ENCODE measurements at regions of chr7 and their contacts with region 1.

Region 1: DNA sequence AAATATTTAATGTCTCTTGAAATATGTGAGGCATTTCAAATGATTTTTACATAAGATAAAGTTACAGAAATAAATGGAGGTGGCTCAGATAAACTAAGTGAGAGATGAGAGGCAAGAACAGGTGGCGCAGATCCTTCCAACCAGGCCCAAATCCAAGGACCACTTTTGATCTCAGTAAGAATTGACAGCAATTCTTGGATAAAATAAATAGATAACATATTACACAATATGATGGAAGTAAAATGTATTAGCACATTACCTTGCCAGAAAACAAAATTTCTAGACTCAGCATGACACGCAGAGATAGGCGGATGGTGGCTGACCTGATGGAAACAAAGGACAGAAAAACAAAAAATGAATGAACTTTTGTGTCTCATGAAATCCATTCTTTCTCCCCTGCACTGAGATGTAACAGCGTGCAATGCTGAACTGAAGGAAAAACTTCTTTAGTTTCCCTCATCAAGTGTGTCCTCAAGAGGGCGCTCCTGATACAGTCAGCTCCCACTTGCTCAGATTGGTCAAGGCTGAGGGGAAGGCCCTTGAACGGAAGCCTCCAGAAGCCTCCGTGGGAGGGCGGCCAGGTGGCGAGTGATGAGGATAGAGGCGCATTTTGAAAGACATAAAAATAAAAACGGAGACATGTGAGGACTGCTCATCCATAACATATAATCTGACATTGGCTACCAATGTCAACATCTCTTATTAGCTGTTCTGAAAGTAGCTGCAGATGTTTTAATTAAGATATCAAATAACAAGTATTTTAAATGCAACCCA is 62.8 kb upstream of the GSDME start:
- DNase-seq: peak; percentile 93
- H3K4me3 Mint-ChIP-seq: peak overlapping the region; percentile 66
- H3K27ac Mint-ChIP-seq: peak overlapping the region; percentile 99
- H3K4me1 Mint-ChIP-seq: peaks cover 39% of the 10 kb centered on the region
- H3K27me3 Mint-ChIP-seq: no peaks in the 10 kb centered on the region
- CTCF ChIP-seq: peak; percentile 77

Region 2: GRCh38 chr7:24854866-24855265 is 34.8 kb after region 1 on chr7:
- CTCF ChIA-PET with region 1: interaction called, 8 read pairs
- POLR2A ChIA-PET with region 1: no interaction called
- intact Hi-C with region 1: loop called (anchors 5 kb)
- DNase-seq: no peak
- H3K4me3 Mint-ChIP-seq: no peak overlapping the region
- H3K27ac Mint-ChIP-seq: no peak overlapping the region
- H3K4me1 Mint-ChIP-seq: peaks cover 8% of the 10 kb centered on the region
- H3K27me3 Mint-ChIP-seq: no peaks in the 10 kb centered on the region
- CTCF ChIP-seq: no peak

Region 3: DNA sequence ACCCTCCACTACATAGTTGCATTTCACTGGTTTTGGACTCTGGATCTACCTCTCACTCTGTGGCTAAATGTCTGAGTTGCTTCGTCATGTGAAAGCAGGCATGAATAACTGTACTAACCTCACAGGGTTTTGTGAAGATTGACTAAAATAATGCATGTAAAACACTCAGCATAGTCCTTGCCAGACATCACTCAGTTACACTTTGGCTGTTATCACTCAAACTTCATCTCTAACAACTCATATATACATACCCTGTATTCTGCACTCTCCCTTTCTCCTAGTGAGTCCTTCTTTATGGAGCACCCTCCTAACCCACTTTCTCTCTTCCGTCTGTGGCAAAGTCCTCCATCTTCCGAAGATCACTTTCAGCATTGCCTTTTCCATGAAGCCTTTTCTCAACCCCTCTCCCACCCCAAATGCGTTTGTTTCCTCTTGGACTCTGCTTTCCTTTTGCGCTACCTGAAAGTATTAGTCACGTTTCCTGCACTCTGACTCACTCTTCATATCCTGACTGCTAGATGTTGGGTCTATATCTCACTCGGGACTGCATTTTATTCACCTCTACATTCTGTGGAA is 87.3 kb after region 1 on chr7:
- CTCF ChIA-PET with region 1: interaction called, 4 read pairs
- POLR2A ChIA-PET with region 1: interaction called, 6 read pairs
- intact Hi-C with region 1: loop called (anchors 1 kb)
- DNase-seq: peak; percentile 89
- H3K4me3 Mint-ChIP-seq: no peak overlapping the region
- H3K27ac Mint-ChIP-seq: no peak overlapping the region
- H3K4me1 Mint-ChIP-seq: peaks cover 43% of the 10 kb centered on the region
- H3K27me3 Mint-ChIP-seq: no peaks in the 10 kb centered on the region
- CTCF ChIP-seq: no peak

Region 4: GRCh38 chr7:24926623-24927524 is 106.8 kb after region 1 on chr7:
- CTCF ChIA-PET with region 1: interaction called, 3 read pairs
- POLR2A ChIA-PET with region 1: interaction called, 11 read pairs
- intact Hi-C with region 1: no loop called
- DNase-seq: no peak
- H3K4me3 Mint-ChIP-seq: peak overlapping the region; percentile 8
- H3K27ac Mint-ChIP-seq: peak overlapping the region; percentile 50
- H3K4me1 Mint-ChIP-seq: peaks cover 38% of the 10 kb centered on the region
- H3K27me3 Mint-ChIP-seq: no peaks in the 10 kb centered on the region
- CTCF ChIP-seq: no peak

Region 5: DNA sequence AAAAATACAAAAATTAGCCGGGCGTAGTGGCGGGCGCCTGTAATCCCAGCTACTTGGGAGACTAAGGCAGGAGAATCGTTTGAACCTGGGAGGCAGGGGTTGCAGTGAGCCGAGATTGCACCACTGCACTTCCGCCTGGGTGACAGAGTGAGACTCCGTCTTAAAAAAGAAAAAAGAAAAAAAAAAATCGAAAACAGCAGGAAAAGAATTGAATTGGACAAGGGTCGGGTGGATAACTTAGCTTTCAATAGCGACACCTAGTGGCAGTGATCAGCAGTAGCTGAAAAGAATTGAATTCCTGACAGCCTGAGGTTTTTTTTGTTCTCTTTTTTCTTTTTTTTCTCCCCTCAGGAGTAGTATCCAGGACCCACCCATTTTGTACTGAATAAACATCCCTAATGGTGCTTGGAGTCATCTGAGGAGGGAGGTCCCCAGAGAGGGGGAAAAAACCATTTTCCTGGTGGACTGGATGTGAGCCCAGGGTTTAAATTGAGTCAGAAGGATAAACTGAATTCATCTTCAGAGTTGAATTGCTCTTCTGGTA is 249.9 kb after region 1 on chr7:
- CTCF ChIA-PET with region 1: interaction called, 22 read pairs
- POLR2A ChIA-PET with region 1: interaction called, 7 read pairs
- intact Hi-C with region 1: loop called (anchors 1 kb)
- DNase-seq: peak; percentile 70
- H3K4me3 Mint-ChIP-seq: no peak overlapping the region
- H3K27ac Mint-ChIP-seq: no peak overlapping the region
- H3K4me1 Mint-ChIP-seq: peaks cover 8% of the 10 kb centered on the region
- H3K27me3 Mint-ChIP-seq: no peaks in the 10 kb centered on the region
- CTCF ChIP-seq: peak; percentile 85